Ascending aorta (tissue), 2 donors: ENCODE measurements at regions of chr1 and their contacts with region 1.

Region 1: DNA sequence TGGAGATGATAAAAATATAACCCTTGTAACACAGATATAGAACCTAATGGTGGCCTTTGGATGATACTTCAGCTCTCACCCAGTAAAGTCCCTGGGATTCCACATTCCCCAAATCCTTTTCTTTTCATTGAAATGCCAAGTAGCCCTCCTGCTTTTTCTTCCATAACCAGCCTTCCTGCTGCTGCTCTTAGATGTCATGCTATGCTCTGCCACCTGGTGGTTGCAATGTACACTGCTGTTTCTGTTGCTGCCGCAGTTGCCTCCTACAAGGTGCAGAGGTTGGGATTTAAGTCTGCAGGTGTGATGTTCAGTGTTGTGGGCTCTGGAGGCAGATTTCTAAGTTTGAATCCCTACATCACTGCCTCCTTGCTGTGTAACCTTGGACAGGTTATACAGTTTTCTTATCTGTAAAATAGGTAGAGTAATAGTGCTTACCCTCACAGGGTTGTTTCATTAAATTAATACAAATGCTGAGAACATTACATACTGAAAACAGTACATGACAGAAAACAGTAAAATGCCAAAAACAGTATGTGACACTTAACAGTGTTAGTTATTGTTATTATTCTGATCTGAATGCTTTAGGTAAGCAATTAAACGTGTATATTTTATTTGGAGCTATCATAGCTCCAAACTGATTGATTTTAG is 64.3 kb downstream of the CAMSAP2 start:
- DNase-seq: peak in 1 of 2 donors; percentile 85
- H3K4me3 ChIP-seq: no peak overlapping the region
- H3K27ac ChIP-seq: no peak overlapping the region
- H3K4me1 ChIP-seq: peaks cover 0 to 5% of the 10 kb centered on the region in 2 donors
- H3K27me3 ChIP-seq: no peaks in the 10 kb centered on the region
- CTCF ChIP-seq: peak; percentile 81 to 94 (median 88)

Region 2: DNA sequence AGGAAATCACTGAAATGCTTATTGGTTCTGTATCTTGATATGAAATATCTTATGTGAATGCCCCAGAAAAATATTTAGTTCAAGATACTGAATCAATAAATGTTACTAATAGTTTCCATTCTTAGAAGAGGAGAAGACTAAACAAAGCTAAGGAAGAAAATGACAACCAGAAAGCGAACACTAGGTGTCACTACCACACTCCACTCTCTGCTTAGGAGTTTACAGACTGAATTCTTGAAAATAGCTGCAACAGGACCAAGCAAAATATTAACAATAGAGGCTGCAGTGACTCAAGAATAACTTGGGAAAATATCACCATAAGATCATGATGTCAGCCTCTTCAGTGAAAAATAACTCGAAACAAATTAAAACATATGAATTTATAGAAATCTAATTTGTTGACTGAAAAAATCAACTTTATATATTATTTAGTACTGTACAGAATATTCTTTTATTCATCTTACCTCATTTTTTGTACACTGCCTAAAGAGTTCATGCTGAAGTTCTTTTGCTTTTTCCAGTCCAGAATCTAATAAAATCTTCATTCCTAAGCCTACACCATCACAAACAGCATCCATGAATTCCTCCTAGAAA is 244.0 kb before region 1 on chr1:
- intact Hi-C with region 1: loop called (anchors 2 kb)
- DNase-seq: no peak
- H3K4me3 ChIP-seq: no peak overlapping the region
- H3K27ac ChIP-seq: no peak overlapping the region
- H3K4me1 ChIP-seq: no peaks in the 10 kb centered on the region
- H3K27me3 ChIP-seq: no peaks in the 10 kb centered on the region
- CTCF ChIP-seq: peak; percentile 14 to 70 (median 43)

Region 3: GRCh38 chr1:200620273-200621131 is 182.5 kb before region 1 on chr1 and contains the start of gene KIF14:
- intact Hi-C with region 1: loop called (anchors 1 kb)
- DNase-seq: peak; percentile 78 to 96
- H3K4me3 ChIP-seq: peak within 1 kb of the TSS; percentile 79
- H3K27ac ChIP-seq: peak within 1 kb of the TSS; percentile 53 to 69
- H3K4me1 ChIP-seq: peaks cover 0 to 4% of the 10 kb centered on the region in 2 donors
- H3K27me3 ChIP-seq: no peaks in the 10 kb centered on the region
- CTCF ChIP-seq: no peak
- total RNA-seq, gene KIF14: not detected

Region 4: GRCh38 chr1:200669314-200670241 is 133.4 kb before region 1 on chr1 and contains the start of gene DDX59:
- intact Hi-C with region 1: loop called (anchors 2 kb)
- DNase-seq: peak; percentile 88 to 98
- H3K4me3 ChIP-seq: peak within 1 kb of the TSS; percentile 72 to 81
- H3K27ac ChIP-seq: peak within 1 kb of the TSS; percentile 95 to 99
- H3K4me1 ChIP-seq: peaks cover 0 to 28% of the 10 kb centered on the region in 2 donors
- H3K27me3 ChIP-seq: no peaks in the 10 kb centered on the region
- CTCF ChIP-seq: no peak
- total RNA-seq, gene DDX59: 7.6 TPM

Region 5: GRCh38 chr1:200738740-200739498 is 64.1 kb before region 1 on chr1 and contains the start of gene CAMSAP2:
- intact Hi-C with region 1: loop called (anchors 2 kb)
- DNase-seq: peak; percentile 47 to 96
- H3K4me3 ChIP-seq: peak within 1 kb of the TSS; percentile 77 to 99
- H3K27ac ChIP-seq: peak within 1 kb of the TSS; percentile 97 to 100
- H3K4me1 ChIP-seq: peaks cover 0 to 15% of the 10 kb centered on the region in 2 donors
- H3K27me3 ChIP-seq: no peaks in the 10 kb centered on the region
- CTCF ChIP-seq: no peak
- total RNA-seq, gene CAMSAP2: 22.4 TPM

Region 6: GRCh38 chr1:200866521-200866920 is 63.5 kb after region 1 on chr1:
- intact Hi-C with region 1: no loop called
- DNase-seq: no peak
- H3K4me3 ChIP-seq: no peak overlapping the region
- H3K27ac ChIP-seq: no peak overlapping the region
- H3K4me1 ChIP-seq: no peaks in the 10 kb centered on the region
- H3K27me3 ChIP-seq: no peaks in the 10 kb centered on the region
- CTCF ChIP-seq: no peak